Activated CD4-positive, alpha-beta T cell treated with anti-CD3 and anti-CD28 coated beads, Interleukin-2, amount 10 ng/mL, durations not matched to agents 24 days and 14 days (primary cell): ENCODE measurements at regions of chr7 and their contacts with region 1.

Region 1: GRCh38 chr7:135147899-135148721 is at the start of gene TMEM140:
- DNase-seq: peak; percentile 92
- H3K4me3 Mint-ChIP-seq: peak within 1 kb of the TSS; percentile 91
- H3K27ac Mint-ChIP-seq: peak within 1 kb of the TSS; percentile 95
- H3K4me1 Mint-ChIP-seq: peaks cover 54% of the 10 kb centered on the region
- H3K27me3 Mint-ChIP-seq: no peaks in the 10 kb centered on the region
- total RNA-seq, gene TMEM140: 2.2 TPM in 2 replicates

Region 2: DNA sequence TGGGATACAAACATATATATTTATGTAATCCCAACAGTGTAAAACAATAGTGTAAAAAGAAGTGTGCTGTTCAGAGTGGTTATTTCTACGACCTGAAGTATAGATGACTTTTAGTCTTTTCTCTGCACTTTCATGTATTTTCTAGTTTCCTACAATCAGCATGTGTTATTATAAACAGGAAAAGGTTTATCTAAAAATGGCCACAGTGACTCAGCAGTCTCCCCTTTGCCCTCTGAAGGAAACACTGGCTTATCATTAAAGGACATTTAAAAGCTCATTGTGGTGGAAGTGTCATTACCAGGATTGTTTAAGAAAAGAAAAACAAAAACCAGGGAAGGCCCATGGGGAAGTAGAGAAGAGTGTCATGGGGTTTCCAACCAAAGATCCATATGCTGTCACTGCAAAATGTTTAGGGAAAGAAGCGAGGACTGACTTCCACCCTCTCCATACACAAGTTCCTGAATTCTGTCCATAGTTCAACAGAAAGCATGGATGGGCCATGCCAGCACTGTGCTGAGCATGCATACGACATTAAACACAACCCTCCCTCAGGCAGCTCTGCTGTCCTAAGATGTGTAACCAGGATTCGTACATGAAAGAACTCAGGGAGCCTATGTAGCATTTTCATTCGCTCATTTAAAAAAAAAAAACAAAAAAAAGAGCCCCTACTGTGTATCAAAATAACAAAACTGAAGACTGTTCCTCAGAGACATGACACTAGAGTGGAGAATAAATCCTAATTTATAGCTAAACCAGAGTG is 12.2 kb after region 1 on chr7:
- intact Hi-C with region 1: loop called (anchors 1 kb)
- DNase-seq: no peak
- H3K4me3 Mint-ChIP-seq: peak overlapping the region; percentile 46
- H3K27ac Mint-ChIP-seq: peak overlapping the region; percentile 82
- H3K4me1 Mint-ChIP-seq: peaks cover 30% of the 10 kb centered on the region
- H3K27me3 Mint-ChIP-seq: no peaks in the 10 kb centered on the region

Region 3: DNA sequence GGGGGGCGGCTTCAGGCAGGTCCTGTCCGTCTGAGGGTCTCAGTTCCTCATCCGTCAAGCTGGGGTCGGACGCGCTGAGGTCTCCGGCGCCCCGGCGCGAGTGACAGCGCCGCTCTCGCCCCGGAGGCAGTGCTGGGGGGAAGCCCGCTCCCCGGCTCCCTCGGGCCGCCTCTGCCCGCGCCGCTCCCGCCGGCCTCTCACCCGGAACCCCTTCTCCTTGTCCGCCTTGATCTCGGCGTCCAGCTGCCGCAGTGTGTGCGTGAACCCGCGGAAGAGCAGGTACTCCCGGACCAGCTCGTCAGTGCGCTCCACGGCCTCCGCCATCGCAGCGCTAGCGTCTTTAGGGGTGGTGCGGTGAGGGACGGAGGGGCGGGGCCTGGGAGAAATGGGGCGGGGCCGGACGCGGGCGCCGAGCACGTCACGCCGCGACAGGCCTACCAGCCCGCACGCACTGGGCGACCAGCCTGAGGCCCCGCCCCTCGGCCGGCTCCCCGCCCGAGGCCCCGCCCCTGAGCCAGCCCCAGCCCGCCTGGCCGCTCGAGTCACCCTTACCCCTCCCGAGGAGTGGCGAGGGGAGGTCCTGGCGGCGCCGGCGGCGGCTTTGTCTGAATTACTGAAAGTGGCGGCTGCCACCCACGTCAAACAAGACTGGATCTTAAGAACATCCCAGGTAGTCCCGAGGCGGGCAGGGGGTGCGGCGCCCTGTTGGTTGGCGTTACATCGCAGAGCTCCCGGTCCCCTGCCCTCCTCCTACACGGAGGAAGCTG is 63.3 kb after region 1 on chr7 and contains the start of gene WDR91:
- intact Hi-C with region 1: loop called (anchors 1 kb)
- DNase-seq: peak; percentile 96
- H3K4me3 Mint-ChIP-seq: peak within 1 kb of the TSS; percentile 95
- H3K27ac Mint-ChIP-seq: peak within 1 kb of the TSS; percentile 98
- H3K4me1 Mint-ChIP-seq: peaks cover 29% of the 10 kb centered on the region
- H3K27me3 Mint-ChIP-seq: no peaks in the 10 kb centered on the region
- total RNA-seq, gene WDR91: 25.8 and 26.6 TPM in 2 replicates